ENCODE measurements at regions of chr6 and their contacts with region 1.

Region 1: GRCh38 chr6:164230259-164230658 is 815.7 kb downstream of the QKI start:
- DNase-seq: no peak
- H3K4me3 ChIP-seq: no peak overlapping the region
- H3K27ac ChIP-seq: no peak overlapping the region
- H3K4me1 ChIP-seq: no peaks in the 10 kb centered on the region
- H3K27me3 ChIP-seq: no peaks in the 10 kb centered on the region
- CTCF ChIP-seq: no peak
- EP300 ChIP-seq: no peak
- POLR2A ChIP-seq: no peak

Region 2: GRCh38 chr6:163814494-163815364 is 415.5 kb before region 1 on chr6:
- in situ Hi-C with region 1: no loop called
- intact Hi-C with region 1: no loop called
- DNase-seq: no peak
- H3K4me3 ChIP-seq: no peak overlapping the region
- H3K27ac ChIP-seq: no peak overlapping the region
- H3K4me1 ChIP-seq: no peaks in the 10 kb centered on the region
- H3K27me3 ChIP-seq: no peaks in the 10 kb centered on the region
- CTCF ChIP-seq: no peak
- EP300 ChIP-seq: no peak
- POLR2A ChIP-seq: no peak

Region 3: DNA sequence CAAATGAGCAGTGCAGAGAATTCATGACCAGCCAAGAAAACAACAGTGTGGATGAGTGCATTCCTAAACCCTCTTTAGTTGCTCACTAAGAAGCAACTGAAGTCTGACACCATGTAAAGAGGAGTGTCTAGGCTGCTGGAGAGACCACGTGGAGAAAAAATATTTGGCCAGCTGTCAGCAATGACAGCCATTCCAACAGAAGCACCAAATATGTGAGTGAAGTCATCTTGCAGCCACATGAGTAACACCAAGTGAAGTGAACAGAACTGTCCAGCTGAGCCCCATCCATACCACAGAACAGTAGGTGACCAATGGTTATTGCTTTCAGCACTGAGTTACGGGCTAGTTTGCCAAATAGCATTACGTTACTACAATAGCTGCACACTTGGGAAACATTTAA is 1848.0 kb after region 1 on chr6:
- in situ Hi-C with region 1: no loop called
- intact Hi-C with region 1: loop called (anchors 10 kb)
- DNase-seq: no peak
- H3K4me3 ChIP-seq: no peak overlapping the region
- H3K27ac ChIP-seq: no peak overlapping the region
- H3K4me1 ChIP-seq: no peaks in the 10 kb centered on the region
- H3K27me3 ChIP-seq: no peaks in the 10 kb centered on the region
- CTCF ChIP-seq: no peak
- EP300 ChIP-seq: no peak
- POLR2A ChIP-seq: no peak

Measured in transverse colon (tissue), 4 donors.